ENCODE measurements at regions of chr6 and their contacts with region 1.

Region 1: DNA sequence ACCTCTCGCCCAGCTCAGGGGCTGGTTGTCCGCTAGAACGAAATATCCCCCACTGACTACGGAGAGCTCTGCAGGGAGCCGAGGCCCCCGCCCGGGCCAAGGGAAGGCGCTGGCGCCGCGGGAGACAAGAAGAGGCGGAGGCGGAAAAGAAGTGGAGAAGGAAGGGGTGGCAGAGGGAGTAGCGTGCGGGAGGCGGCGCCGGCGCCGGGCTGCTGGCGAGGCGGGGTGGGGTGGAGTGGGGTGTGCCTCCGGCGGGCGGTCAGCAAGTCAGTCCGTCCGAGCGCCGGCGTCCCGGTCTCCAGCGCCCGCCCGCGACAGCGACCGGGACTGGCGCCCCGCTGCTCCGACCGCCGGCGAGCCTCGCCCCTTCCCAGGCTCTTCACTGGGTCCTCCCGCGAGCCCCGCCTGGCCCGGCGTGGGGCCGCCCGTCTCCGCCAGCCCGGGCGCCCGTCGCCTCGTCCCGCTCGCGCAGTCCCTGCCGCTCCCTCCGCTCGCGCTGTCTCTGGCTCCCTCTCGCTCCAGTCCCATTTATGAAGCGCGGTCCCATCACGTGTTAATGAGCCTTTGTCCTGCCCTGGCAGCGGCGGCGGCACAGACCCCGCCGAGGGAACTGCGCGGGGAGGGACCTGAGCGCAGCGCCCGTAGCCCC is at the start of gene CNR1:
- DNase-seq: no peak
- ATAC-seq: peak; percentile 59
- H3K4me3 ChIP-seq: peak within 1 kb of the TSS; percentile 32 to 82 (median 75)
- H3K4me3 Mint-ChIP-seq: peak within 1 kb of the TSS; percentile 98
- H3K27ac ChIP-seq: peak within 1 kb of the TSS; percentile 67 to 89
- H3K27ac Mint-ChIP-seq: peak within 1 kb of the TSS; percentile 98
- H3K4me1 ChIP-seq: peaks cover 21 to 30% of the 10 kb centered on the region in 2 donors
- H3K4me1 Mint-ChIP-seq: peaks cover 33% of the 10 kb centered on the region
- H3K27me3 ChIP-seq: peaks cover 0 to 18% (median 5%) of the 10 kb centered on the region in 4 experiments
- H3K27me3 Mint-ChIP-seq: peaks cover 15% of the 10 kb centered on the region
- CTCF ChIP-seq: no peak
- total RNA-seq, gene CNR1: 20.4 and 28.9 TPM in 2 replicates

Region 2: GRCh38 chr6:87832025-87832825 is 333.7 kb before region 1 on chr6:
- CTCF ChIA-PET with region 1: interaction called, 10 read pairs
- POLR2A ChIA-PET with region 1: no interaction called
- intact Hi-C with region 1: loop called (anchors 1 kb)
- DNase-seq: peak; percentile 73
- ATAC-seq: peak; percentile 74
- H3K4me3 ChIP-seq: peak overlapping the region; percentile 42 to 81 (median 64)
- H3K4me3 Mint-ChIP-seq: peak overlapping the region; percentile 89
- H3K27ac ChIP-seq: peak overlapping the region; percentile 74 to 89
- H3K27ac Mint-ChIP-seq: peak overlapping the region; percentile 78
- H3K4me1 ChIP-seq: peaks cover 6 to 7% of the 10 kb centered on the region in 2 donors
- H3K4me1 Mint-ChIP-seq: peaks cover 14% of the 10 kb centered on the region
- H3K27me3 ChIP-seq: no peaks in the 10 kb centered on the region
- H3K27me3 Mint-ChIP-seq: no peaks in the 10 kb centered on the region
- CTCF ChIP-seq: peak; percentile 76

Region 3: GRCh38 chr6:88141561-88142296 is 24.2 kb before region 1 on chr6:
- CTCF ChIA-PET with region 1: interaction called, 22 read pairs
- POLR2A ChIA-PET with region 1: interaction called, 32 read pairs
- intact Hi-C with region 1: loop called (anchors 1 kb)
- DNase-seq: peak; percentile 91
- ATAC-seq: peak; percentile 91
- H3K4me3 ChIP-seq: peak overlapping the region in 2 of 5 experiments; percentile 30 to 33
- H3K4me3 Mint-ChIP-seq: peak overlapping the region; percentile 67
- H3K27ac ChIP-seq: peak overlapping the region; percentile 87 to 95
- H3K27ac Mint-ChIP-seq: peak overlapping the region; percentile 96
- H3K4me1 ChIP-seq: peaks cover 45 to 49% of the 10 kb centered on the region in 2 donors
- H3K4me1 Mint-ChIP-seq: peaks cover 56% of the 10 kb centered on the region
- H3K27me3 ChIP-seq: no peaks in the 10 kb centered on the region
- H3K27me3 Mint-ChIP-seq: no peaks in the 10 kb centered on the region
- CTCF ChIP-seq: no peak

Region 4: GRCh38 chr6:88177961-88178464 is 12.0 kb after region 1 on chr6:
- CTCF ChIA-PET with region 1: interaction called, 9 read pairs
- POLR2A ChIA-PET with region 1: interaction called, 9 read pairs
- intact Hi-C with region 1: loop called (anchors 1 kb)
- DNase-seq: peak; percentile 79
- ATAC-seq: peak; percentile 61
- H3K4me3 ChIP-seq: peak overlapping the region in 1 of 5 experiments; percentile 45
- H3K4me3 Mint-ChIP-seq: peak overlapping the region; percentile 57
- H3K27ac ChIP-seq: peak overlapping the region; percentile 61 to 85
- H3K27ac Mint-ChIP-seq: peak overlapping the region; percentile 81
- H3K4me1 ChIP-seq: peaks cover 52 to 63% of the 10 kb centered on the region in 2 donors
- H3K4me1 Mint-ChIP-seq: peaks cover 58% of the 10 kb centered on the region
- H3K27me3 ChIP-seq: no peaks in the 10 kb centered on the region
- H3K27me3 Mint-ChIP-seq: no peaks in the 10 kb centered on the region
- CTCF ChIP-seq: no peak

Region 5: GRCh38 chr6:88616380-88616779 is 450.4 kb after region 1 on chr6:
- CTCF ChIA-PET with region 1: interaction called, 3 read pairs
- POLR2A ChIA-PET with region 1: no interaction called
- intact Hi-C with region 1: loop called (anchors 10 kb)
- DNase-seq: peak; percentile 76
- ATAC-seq: peak; percentile 53
- H3K4me3 ChIP-seq: peak overlapping the region in 1 of 5 experiments; percentile 15
- H3K4me3 Mint-ChIP-seq: peak overlapping the region; percentile 6
- H3K27ac ChIP-seq: peak overlapping the region in 1 of 2 donors; percentile 99
- H3K27ac Mint-ChIP-seq: peak overlapping the region; percentile 90
- H3K4me1 ChIP-seq: peaks cover 54 to 74% of the 10 kb centered on the region in 2 donors
- H3K4me1 Mint-ChIP-seq: peaks cover 60% of the 10 kb centered on the region
- H3K27me3 ChIP-seq: no peaks in the 10 kb centered on the region
- H3K27me3 Mint-ChIP-seq: no peaks in the 10 kb centered on the region
- CTCF ChIP-seq: no peak

Region 6: DNA sequence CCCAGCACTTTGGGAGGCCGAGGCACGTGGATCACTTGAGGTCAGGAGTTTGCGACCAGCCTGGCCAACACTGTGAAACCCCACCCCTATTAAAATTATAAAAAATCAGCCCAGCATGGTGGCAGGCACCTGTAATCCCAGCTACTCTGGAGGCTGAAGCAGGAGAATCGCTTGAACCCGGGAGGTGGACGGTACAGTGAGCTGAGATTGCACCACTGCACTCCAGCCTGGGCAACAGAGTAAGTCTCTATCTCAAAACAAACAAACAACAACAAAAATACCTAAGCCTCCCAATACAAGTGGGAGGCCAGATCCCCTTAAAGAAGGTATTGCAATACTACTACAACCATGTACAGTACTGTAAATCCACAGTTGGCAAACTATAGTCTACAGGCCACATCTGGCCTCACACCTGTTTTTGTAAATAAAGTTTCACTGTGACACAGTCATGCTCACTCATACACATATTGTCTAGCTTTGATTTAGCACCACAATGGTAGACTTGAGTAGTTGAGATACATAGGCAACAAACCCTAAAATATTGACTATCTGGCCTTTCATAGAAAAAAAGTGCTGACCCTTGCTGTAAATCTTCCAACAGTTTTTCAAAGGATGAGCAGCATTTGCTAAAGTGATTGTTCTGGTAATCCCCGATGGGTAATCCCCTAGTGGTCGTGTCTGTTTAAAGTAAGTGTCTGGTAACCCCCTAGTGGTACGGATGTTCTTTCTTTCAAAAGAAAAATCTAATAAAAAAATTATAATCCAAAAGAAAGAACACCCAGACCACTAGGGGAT is 595.5 kb after region 1 on chr6:
- CTCF ChIA-PET with region 1: no interaction called
- POLR2A ChIA-PET with region 1: no interaction called
- intact Hi-C with region 1: no loop called
- DNase-seq: peak; percentile 77
- ATAC-seq: peak; percentile 79
- H3K4me3 ChIP-seq: no peak overlapping the region
- H3K4me3 Mint-ChIP-seq: peak overlapping the region; percentile 1
- H3K27ac ChIP-seq: peak overlapping the region in 1 of 2 donors; percentile 70
- H3K27ac Mint-ChIP-seq: peak overlapping the region; percentile 51
- H3K4me1 ChIP-seq: peaks cover 16 to 18% of the 10 kb centered on the region in 2 donors
- H3K4me1 Mint-ChIP-seq: peaks cover 33% of the 10 kb centered on the region
- H3K27me3 ChIP-seq: no peaks in the 10 kb centered on the region
- H3K27me3 Mint-ChIP-seq: no peaks in the 10 kb centered on the region
- CTCF ChIP-seq: peak; percentile 48